Activated T-helper 1 cell treated with anti-CD3 and anti-CD28 coated beads, Interleukin-12 subunit alpha, Interleukin-12 subunit beta, Interleukin-2, Interleukin-4 antibody, amounts not matched to agents 30 ng/mL and 10 ng/mL and 1 ng/mL, durations not matched to agents 14 hours and 24 hours and 36 hours (primary cell): ENCODE measurements at regions of chr13 and their contacts with region 1.

Region 1: GRCh38 chr13:98986226-98986846 is 8.5 kb upstream of the DOCK9 start:
- DNase-seq: no peak
- H3K4me3 Mint-ChIP-seq: no peak overlapping the region
- H3K27ac Mint-ChIP-seq: no peak overlapping the region
- H3K4me1 Mint-ChIP-seq: peaks cover 60% of the 10 kb centered on the region
- H3K27me3 Mint-ChIP-seq: no peaks in the 10 kb centered on the region

Region 2: GRCh38 chr13:98576963-98577822 is 409.1 kb before region 1 on chr13 and contains the start of gene STK24:
- intact Hi-C with region 1: no loop called
- DNase-seq: peak; percentile 66
- H3K4me3 Mint-ChIP-seq: peak within 1 kb of the TSS; percentile 98
- H3K27ac Mint-ChIP-seq: peak within 1 kb of the TSS; percentile 86
- H3K4me1 Mint-ChIP-seq: peaks cover 45% of the 10 kb centered on the region
- H3K27me3 Mint-ChIP-seq: no peaks in the 10 kb centered on the region
- total RNA-seq, gene STK24: 135 and 139 TPM in 2 replicates

Region 3: GRCh38 chr13:98685146-98685545 is 301.2 kb before region 1 on chr13:
- intact Hi-C with region 1: no loop called
- DNase-seq: no peak
- H3K4me3 Mint-ChIP-seq: no peak overlapping the region
- H3K27ac Mint-ChIP-seq: no peak overlapping the region
- H3K4me1 Mint-ChIP-seq: no peaks in the 10 kb centered on the region
- H3K27me3 Mint-ChIP-seq: peaks cover 10% of the 10 kb centered on the region

Region 4: DNA sequence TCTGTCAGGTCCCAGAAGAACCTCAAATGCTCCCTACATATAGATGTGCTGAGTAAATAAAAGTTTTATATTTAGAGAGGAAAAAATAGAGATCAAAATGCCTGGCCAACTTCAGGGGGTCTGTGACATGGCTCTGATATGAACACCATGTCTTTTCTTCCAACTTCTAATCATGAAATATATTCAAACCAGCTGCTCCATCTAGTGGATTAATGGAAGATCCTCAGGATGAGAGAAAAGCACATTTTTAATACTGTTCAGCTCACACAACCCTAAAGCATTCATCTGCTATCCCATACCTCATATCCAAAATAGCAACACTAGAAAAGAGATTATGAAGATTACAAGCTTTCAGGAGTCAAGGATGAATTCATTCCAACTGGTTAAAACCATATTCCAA is 47.5 kb after region 1 on chr13:
- intact Hi-C with region 1: loop called (anchors 5 kb)
- DNase-seq: no peak
- H3K4me3 Mint-ChIP-seq: no peak overlapping the region
- H3K27ac Mint-ChIP-seq: no peak overlapping the region
- H3K4me1 Mint-ChIP-seq: peaks cover 23% of the 10 kb centered on the region
- H3K27me3 Mint-ChIP-seq: no peaks in the 10 kb centered on the region

Region 5: GRCh38 chr13:99250982-99251825 is 264.9 kb after region 1 on chr13:
- intact Hi-C with region 1: no loop called
- DNase-seq: no peak
- H3K4me3 Mint-ChIP-seq: no peak overlapping the region
- H3K27ac Mint-ChIP-seq: no peak overlapping the region
- H3K4me1 Mint-ChIP-seq: peaks cover 42% of the 10 kb centered on the region
- H3K27me3 Mint-ChIP-seq: no peaks in the 10 kb centered on the region